H1 (cell line): ENCODE measurements at regions of chr11 and their contacts with region 1.

Region 1: GRCh38 chr11:8566613-8567210 is 27.3 kb downstream of the STK33 start:
- DNase-seq: no peak
- H3K4me3 ChIP-seq: no peak overlapping the region
- H3K27ac ChIP-seq: no peak overlapping the region
- H3K4me1 ChIP-seq: no peaks in the 10 kb centered on the region
- H3K27me3 ChIP-seq: no peaks in the 10 kb centered on the region
- CTCF ChIP-seq: peak in 2 of 3 experiments; percentile 38 to 39; a peak in 2 of 4 replicates
- EP300 ChIP-seq: no peak
- POLR2A ChIP-seq: no peak
- RAD21 ChIP-seq: peak; percentile 63 to 76

Region 2: DNA sequence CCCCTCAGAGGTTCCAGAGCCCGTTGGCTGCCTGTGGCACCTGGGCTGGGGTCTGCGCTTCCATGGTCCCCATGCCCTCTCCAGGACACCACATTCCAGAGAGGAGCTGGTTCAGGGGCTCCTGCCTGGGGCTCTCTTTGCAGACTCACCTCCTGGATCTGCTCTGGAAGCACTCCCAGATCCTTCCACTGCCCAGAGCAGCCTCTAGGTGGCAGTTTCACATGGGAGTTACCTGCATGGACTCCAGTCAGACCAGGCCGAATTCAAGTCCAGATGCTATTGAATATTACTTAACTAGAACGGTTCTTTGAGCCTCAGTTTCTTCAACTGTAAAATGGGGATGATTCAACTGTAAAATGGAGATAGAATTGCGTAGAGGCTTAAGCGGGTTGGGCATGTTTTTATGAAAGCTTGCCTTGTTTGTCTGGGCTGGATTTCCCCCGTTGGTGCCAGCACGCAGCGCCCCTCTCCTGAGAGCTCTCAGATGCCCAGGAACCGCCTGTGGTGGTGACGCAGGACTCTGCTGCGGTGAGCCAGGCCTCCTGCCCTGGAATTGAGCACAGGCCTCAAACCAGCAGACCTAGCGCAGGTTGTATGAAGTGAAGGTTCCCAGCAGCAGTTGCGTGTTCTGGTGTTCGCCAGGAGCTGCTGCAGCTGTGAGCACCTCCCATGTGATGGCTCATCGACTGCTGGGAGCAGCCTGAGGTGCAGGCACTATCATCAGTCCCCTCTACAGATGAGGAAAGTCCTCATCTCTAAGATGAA is 347.3 kb before region 1 on chr11:
- CTCF ChIA-PET with region 1: interaction called, 11 read pairs
- POLR2A ChIA-PET with region 1: no interaction called
- DNase-seq: peak in 1 of 2 experiments; percentile 73
- H3K4me3 ChIP-seq: no peak overlapping the region
- H3K27ac ChIP-seq: no peak overlapping the region
- H3K4me1 ChIP-seq: peaks cover 0 to 2% (median 0%) of the 10 kb centered on the region in 4 experiments; a peak in 1 of 7 replicates
- H3K27me3 ChIP-seq: no peaks in the 10 kb centered on the region; a peak in 1 of 7 replicates
- CTCF ChIP-seq: peak; percentile 70 to 78 (median 73)
- EP300 ChIP-seq: no peak
- POLR2A ChIP-seq: no peak
- RAD21 ChIP-seq: peak; percentile 42 to 64

Region 3: GRCh38 chr11:8365216-8365941 is 201.3 kb before region 1 on chr11:
- CTCF ChIA-PET with region 1: interaction called, 17 read pairs
- POLR2A ChIA-PET with region 1: no interaction called
- DNase-seq: peak in 1 of 2 experiments; percentile 71
- H3K4me3 ChIP-seq: no peak overlapping the region
- H3K27ac ChIP-seq: no peak overlapping the region
- H3K4me1 ChIP-seq: no peaks in the 10 kb centered on the region
- H3K27me3 ChIP-seq: no peaks in the 10 kb centered on the region
- CTCF ChIP-seq: peak; percentile 12 to 38 (median 30)
- EP300 ChIP-seq: no peak
- POLR2A ChIP-seq: no peak
- RAD21 ChIP-seq: peak; percentile 21 to 38; a peak in 2 of 4 replicates

Region 4: GRCh38 chr11:8384199-8384821 is 182.4 kb before region 1 on chr11:
- CTCF ChIA-PET with region 1: interaction called, 19 read pairs
- POLR2A ChIA-PET with region 1: no interaction called
- DNase-seq: no peak
- H3K4me3 ChIP-seq: no peak overlapping the region
- H3K27ac ChIP-seq: no peak overlapping the region
- H3K4me1 ChIP-seq: peaks cover 0 to 8% (median 0%) of the 10 kb centered on the region in 4 experiments; a peak in 3 of 7 replicates
- H3K27me3 ChIP-seq: no peaks in the 10 kb centered on the region
- CTCF ChIP-seq: peak; percentile 32 to 46 (median 44); a peak in 3 of 4 replicates
- EP300 ChIP-seq: no peak
- POLR2A ChIP-seq: no peak
- RAD21 ChIP-seq: peak; percentile 73 to 74

Region 5: DNA sequence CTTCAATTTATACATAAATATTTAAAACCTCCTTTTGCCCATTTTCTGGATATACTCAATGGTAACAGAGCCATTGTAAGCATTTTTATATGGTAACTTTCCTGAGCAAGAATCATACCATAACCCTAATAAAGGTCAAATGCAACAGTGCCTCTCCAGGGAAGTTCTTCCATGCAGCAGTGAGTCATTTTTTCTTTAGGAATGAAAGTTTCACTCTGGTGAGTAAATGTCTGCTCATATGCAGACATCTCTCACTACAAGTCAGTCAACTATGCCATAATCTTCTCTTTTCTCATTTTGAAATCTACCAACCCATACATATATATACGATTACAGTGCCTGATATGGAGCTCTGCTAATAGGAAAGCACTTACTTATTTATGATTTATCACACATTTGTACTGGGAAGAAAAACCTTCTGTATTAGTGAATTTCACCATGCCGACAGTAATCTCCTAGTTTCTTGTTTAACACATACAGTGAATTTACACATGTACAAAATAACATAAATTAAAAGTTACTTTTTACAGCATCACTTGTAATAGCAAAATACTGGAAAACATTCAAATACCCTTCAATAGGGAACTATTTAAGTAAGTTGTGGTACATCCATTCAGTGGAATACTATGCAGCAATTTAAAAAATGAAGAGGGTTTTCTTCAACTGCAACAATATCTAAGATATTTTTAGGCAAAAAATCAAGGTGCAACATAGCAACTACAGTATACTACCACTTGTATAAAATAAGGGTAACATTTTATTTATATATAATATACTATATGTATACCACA is 11.3 kb after region 1 on chr11:
- CTCF ChIA-PET with region 1: interaction called, 15 read pairs
- POLR2A ChIA-PET with region 1: no interaction called
- DNase-seq: no peak
- H3K4me3 ChIP-seq: no peak overlapping the region
- H3K27ac ChIP-seq: no peak overlapping the region
- H3K4me1 ChIP-seq: no peaks in the 10 kb centered on the region
- H3K27me3 ChIP-seq: no peaks in the 10 kb centered on the region
- CTCF ChIP-seq: no peak
- EP300 ChIP-seq: no peak
- POLR2A ChIP-seq: no peak
- RAD21 ChIP-seq: no peak

Region 6: DNA sequence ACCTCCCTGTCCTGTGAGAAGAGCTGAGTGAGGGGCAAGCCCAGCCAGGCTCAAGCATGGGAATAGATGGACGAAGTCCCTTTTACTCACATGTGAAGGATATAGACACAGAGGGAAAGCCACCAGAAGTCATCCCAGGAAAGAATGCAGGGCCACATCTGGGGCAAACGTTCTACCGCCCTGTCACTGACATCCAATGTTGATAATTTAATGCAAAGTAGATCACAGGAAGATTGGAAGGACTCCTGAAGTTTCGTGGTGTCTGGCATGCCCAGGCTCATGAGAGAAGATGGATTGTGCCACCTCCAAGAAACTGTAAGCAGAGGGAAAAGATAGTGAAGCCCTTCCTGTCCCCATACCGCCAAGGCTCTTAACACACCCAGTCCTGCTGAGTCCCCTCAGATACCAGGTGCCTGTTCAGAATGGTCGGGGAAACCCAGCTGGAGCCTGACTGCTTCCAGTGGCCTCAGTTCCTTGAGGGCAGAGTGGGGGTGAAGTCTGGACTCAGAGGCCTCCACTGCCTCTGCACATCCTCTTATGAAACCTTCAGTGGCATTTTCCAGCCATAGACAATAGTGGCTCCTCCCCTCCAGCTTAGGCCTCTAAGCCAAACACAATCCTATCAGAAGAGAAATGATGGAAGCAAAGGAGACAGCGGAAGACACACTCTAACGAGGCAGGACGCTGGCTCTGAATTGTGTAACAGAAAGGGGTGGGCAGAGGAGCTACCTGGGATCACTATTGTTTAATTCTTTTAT is 34.8 kb after region 1 on chr11:
- CTCF ChIA-PET with region 1: no interaction called
- POLR2A ChIA-PET with region 1: no interaction called
- DNase-seq: peak in 1 of 2 experiments; percentile 39
- H3K4me3 ChIP-seq: no peak overlapping the region
- H3K27ac ChIP-seq: no peak overlapping the region
- H3K4me1 ChIP-seq: no peaks in the 10 kb centered on the region
- H3K27me3 ChIP-seq: no peaks in the 10 kb centered on the region
- CTCF ChIP-seq: no peak
- EP300 ChIP-seq: no peak
- POLR2A ChIP-seq: no peak
- RAD21 ChIP-seq: no peak